ENCODE measurements at regions of chr2 and their contacts with region 1.

Region 1: GRCh38 chr2:85504778-85505323 is 34.1 kb upstream of the MAT2A start:
- DNase-seq: peak; percentile 60
- ATAC-seq: peak; percentile 43 to 88

Region 2: DNA sequence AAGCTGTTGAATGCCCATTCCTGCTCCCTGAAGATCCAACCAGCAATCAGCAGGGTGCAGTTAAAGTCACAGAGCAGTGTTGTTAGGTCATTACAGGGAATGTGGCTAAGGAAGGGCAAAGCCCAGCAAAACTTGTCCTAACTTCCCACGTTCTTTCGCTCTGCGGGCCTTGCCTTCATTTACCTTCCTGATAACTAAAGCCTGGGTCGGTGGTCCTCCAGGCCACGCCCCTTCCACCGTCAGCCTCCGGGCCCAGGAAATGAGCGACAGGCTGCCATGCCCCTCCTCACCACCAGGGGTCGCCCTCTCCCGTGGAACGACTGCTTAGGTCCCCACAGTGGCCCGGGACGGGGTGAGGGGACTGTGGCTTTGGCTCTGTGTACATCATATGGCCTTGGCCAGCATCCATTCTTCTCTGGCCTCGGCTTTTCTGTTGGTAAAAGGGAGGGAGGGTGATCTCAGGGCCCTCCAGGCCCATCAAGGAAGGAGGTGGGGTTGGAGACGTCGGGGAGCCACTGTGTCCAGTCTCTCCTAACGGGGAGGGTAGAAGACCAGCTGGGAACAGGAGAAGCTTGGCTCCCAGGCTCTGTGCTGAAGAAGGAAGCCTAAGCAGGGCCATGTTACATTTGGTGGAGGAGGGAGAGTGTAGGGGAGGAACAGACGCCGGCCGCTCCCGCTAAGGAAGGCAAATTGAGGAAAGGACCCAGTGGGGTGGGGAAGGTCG is 84.2 kb before region 1 on chr2:
- intact Hi-C with region 1: no loop called
- DNase-seq: peak; percentile 92
- ATAC-seq: peak; percentile 77 to 78

Region 3: DNA sequence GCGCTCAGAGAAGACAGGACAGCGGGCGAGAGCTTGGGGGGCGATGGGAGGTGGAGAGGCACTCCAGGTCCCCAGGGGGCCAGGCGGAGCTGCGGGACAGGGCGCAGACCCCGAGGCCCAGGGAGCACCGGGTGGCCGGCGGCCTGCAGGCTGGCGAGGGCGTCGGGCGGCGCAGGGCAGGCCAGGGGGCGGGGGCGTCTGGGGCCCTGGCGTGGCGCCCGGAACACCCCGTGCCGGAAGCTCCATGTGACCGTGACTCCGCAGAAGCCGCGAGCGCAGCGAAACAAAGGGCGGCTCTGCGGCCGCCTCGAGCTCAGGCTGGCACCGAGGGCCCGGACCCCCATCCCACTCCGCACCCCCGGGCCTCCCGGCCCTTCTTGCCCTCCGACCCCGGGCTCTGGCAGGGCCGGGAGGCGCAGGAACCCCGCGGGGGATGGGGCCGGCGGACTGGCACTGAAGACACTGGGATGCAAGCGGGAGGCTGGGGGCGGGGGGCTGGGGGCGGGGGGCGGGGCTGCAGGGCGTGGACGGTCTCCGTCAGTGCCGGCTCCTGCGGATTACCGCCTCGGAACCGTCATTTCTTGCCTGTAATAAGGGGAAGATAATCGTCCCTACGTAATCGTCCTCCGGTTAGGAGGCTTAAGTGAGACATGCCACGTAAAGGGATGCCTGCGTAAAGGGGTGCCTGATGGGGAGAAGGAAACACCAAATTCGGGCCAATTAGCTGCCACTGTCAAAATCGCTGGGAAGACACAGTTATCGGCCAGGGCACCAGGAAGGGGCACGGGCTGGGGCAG is 67.2 kb before region 1 on chr2:
- intact Hi-C with region 1: loop called in 1 of 2 experiments (anchors 2 kb)
- DNase-seq: peak; percentile 92
- ATAC-seq: peak; percentile 82 to 88

Region 4: GRCh38 chr2:85561317-85561979 is 56.6 kb after region 1 on chr2 and contains the start of gene GGCX:
- intact Hi-C with region 1: no loop called
- DNase-seq: peak; percentile 96
- ATAC-seq: peak; percentile 95 to 96
- total RNA-seq, gene GGCX: 34.0 to 37.3 TPM